ENCODE measurements at regions of chr10 and their contacts with region 1.

Region 1: GRCh38 chr10:24360282-24361127 is 151.6 kb downstream of the KIAA1217 start:
- DNase-seq: peak; percentile 73
- ATAC-seq: peak; percentile 88
- H3K4me3 ChIP-seq: no peak overlapping the region
- H3K27ac ChIP-seq: no peak overlapping the region
- H3K4me1 ChIP-seq: no peaks in the 10 kb centered on the region
- H3K27me3 ChIP-seq: no peaks in the 10 kb centered on the region
- CTCF ChIP-seq: peak; percentile 79
- POLR2A ChIP-seq: no peak
- RAD21 ChIP-seq: peak; percentile 90

Region 2: DNA sequence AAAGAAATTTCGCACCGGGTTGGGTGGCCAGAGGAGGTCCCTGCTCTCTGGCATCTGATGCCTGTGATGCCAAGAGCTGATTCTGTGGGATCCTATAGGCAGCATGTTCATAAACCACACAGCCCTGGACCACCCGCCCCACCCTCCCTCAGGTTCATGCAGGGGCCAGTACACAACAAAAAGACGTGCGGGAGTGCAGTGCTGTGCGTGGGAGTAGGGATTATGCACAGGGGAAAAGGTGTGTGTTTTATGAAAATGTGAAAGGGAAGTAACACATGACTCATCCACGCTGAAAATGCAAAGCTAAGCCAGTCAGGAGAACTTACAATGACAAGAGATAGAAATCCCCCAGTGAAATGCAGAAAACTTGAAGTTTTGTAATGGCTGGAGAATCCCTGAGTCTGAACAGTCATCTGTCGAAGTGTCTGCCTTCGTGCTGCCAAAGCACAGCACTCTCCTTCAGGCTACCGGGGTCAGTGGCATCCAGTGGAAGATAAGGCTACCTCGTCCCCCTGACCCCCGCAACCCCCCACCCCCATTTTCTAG is 150.5 kb before region 1 on chr10:
- CTCF ChIA-PET with region 1: interaction called, 4 read pairs
- POLR2A ChIA-PET with region 1: no interaction called
- dilution Hi-C with region 1: no loop called
- in situ Hi-C with region 1: no loop called
- intact Hi-C with region 1: loop called (anchors 5 kb)
- DNase-seq: peak; percentile 71
- ATAC-seq: peak; percentile 35
- H3K4me3 ChIP-seq: no peak overlapping the region
- H3K27ac ChIP-seq: no peak overlapping the region
- H3K4me1 ChIP-seq: peaks cover 4% of the 10 kb centered on the region; the same call in 1 of the 2 replicates
- H3K27me3 ChIP-seq: peaks cover 3% of the 10 kb centered on the region
- CTCF ChIP-seq: no peak
- POLR2A ChIP-seq: no peak
- RAD21 ChIP-seq: no peak

Region 3: DNA sequence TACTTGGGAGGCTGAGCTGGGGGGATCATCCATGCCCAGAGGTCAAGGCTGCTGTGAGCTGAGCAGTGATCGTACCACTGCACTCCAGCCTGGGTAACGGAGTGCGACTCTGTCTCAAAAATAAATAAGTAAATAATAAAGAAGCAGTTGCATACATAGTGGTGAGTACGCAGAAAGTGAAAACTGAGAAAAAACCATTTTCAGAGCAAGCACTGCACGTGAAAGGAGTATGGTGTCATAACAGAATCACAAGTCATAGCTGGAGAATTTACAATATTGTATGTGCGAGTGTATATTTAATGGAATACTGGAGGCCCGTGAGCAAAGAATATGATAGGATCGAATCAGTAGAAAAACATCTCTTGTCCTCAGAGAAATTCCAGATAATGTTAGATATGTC is 129.3 kb before region 1 on chr10:
- CTCF ChIA-PET with region 1: no interaction called
- POLR2A ChIA-PET with region 1: no interaction called
- dilution Hi-C with region 1: no loop called
- in situ Hi-C with region 1: no loop called
- intact Hi-C with region 1: no loop called
- DNase-seq: no peak
- ATAC-seq: no peak
- H3K4me3 ChIP-seq: no peak overlapping the region
- H3K27ac ChIP-seq: no peak overlapping the region
- H3K4me1 ChIP-seq: no peaks in the 10 kb centered on the region
- H3K27me3 ChIP-seq: no peaks in the 10 kb centered on the region
- CTCF ChIP-seq: no peak
- POLR2A ChIP-seq: no peak
- RAD21 ChIP-seq: no peak

Region 4: GRCh38 chr10:24518981-24519597 is 158.6 kb after region 1 on chr10:
- CTCF ChIA-PET with region 1: no interaction called
- POLR2A ChIA-PET with region 1: no interaction called
- dilution Hi-C with region 1: no loop called
- in situ Hi-C with region 1: no loop called
- intact Hi-C with region 1: loop called (anchors 2 kb)
- DNase-seq: peak; percentile 60
- ATAC-seq: peak; percentile 90
- H3K4me3 ChIP-seq: no peak overlapping the region
- H3K27ac ChIP-seq: no peak overlapping the region
- H3K4me1 ChIP-seq: no peaks in the 10 kb centered on the region; the same call in 1 of the 2 replicates
- H3K27me3 ChIP-seq: no peaks in the 10 kb centered on the region
- CTCF ChIP-seq: peak; percentile 84
- POLR2A ChIP-seq: no peak
- RAD21 ChIP-seq: peak; percentile 89

Measured in IMR-90 (cell line).